AG04449 (cell line): ENCODE measurements at regions of chr19 and their contacts with region 1.

Region 1: GRCh38 chr19:40662921-40663694 is 27.3 kb downstream of the NUMBL start:
- DNase-seq: no peak
- H3K4me3 ChIP-seq: peak overlapping the region; percentile 68
- CTCF ChIP-seq: peak; percentile 94

Region 2: GRCh38 chr19:40640744-40641143 is 22.4 kb before region 1 on chr19:
- CTCF ChIA-PET with region 1: interaction called, 28 read pairs
- POLR2A ChIA-PET with region 1: interaction called, 3 read pairs
- DNase-seq: no peak
- H3K4me3 ChIP-seq: no peak overlapping the region
- CTCF ChIP-seq: no peak

Region 3: DNA sequence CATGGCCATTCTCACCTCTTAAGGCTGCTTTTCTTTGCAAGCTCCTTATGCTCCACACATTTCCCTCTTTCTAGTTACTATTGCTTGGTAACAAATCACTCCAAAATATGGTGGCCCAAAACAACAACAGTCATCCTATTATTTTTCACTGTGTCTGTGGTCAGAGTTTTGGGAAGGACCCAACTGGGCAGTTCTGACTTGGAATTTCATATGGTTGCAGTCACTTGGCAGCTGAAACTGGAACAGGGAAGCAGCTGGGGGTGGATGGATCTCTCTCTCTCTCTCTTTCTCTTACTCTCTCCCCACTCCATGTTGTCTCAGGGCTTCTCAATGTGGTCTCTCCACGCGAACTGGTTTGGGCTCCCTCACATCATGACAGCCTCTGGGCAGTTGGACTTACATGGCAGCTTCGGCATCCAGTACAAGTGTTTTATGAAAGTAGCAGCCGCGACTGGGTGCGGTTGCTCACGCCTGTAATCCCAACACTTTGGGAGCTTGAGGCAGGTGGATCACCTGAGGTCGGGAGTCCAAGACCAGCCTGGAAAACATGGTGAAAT is 12.3 kb before region 1 on chr19:
- CTCF ChIA-PET with region 1: interaction called, 42 read pairs
- POLR2A ChIA-PET with region 1: interaction called, 3 read pairs
- DNase-seq: no peak
- H3K4me3 ChIP-seq: no peak overlapping the region
- CTCF ChIP-seq: no peak

Region 4: GRCh38 chr19:40674291-40674690 is 11.2 kb after region 1 on chr19:
- CTCF ChIA-PET with region 1: interaction called, 16 read pairs
- POLR2A ChIA-PET with region 1: interaction called, 3 read pairs
- DNase-seq: no peak
- H3K4me3 ChIP-seq: no peak overlapping the region
- CTCF ChIP-seq: no peak

Region 5: GRCh38 chr19:40806488-40807468 is 143.7 kb after region 1 on chr19:
- CTCF ChIA-PET with region 1: interaction called, 58 read pairs
- POLR2A ChIA-PET with region 1: interaction called, 4 read pairs
- DNase-seq: peak; percentile 63
- H3K4me3 ChIP-seq: peak overlapping the region; percentile 20
- CTCF ChIP-seq: peak; percentile 98

Region 6: DNA sequence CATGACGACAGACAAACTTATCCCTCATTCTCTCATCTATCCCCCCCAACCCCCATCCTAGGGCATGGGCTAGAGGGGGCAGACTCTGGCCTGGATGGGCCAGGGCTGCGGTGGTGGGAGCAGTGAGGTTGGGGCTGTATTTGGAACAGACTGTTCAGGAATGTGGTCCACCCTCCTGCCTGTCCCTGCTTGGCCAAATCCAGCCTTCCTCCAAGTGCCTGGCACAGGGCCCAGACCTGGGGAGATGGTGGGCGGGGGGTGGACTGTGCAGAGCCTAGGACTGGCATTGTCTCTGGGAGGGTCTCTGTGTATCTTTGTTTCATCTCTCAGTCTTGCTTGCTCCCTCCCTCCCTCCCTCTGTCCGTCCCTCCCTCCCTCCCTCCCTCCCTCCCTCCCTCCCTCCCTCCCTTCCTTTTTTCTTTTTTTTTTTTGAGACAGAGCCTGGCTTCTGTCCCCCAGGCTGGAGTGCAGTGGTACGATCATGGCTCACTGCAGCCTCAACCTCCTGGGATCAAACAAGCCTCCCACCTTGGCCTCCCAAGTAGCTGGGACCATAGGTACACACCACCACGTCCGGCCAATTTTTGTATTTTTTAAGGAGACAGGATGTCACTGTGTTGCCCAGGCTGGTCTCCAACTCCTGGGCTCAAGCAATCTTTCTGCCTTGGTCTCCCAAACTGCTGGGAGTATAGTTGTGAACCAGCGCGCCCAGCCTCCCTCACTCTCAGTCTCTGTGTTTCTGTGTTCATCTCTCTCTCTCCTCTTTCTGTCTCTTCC is 150.3 kb after region 1 on chr19:
- CTCF ChIA-PET with region 1: interaction called, 58 read pairs
- POLR2A ChIA-PET with region 1: interaction called, 4 read pairs
- DNase-seq: no peak
- H3K4me3 ChIP-seq: no peak overlapping the region
- CTCF ChIP-seq: no peak

Region 7: DNA sequence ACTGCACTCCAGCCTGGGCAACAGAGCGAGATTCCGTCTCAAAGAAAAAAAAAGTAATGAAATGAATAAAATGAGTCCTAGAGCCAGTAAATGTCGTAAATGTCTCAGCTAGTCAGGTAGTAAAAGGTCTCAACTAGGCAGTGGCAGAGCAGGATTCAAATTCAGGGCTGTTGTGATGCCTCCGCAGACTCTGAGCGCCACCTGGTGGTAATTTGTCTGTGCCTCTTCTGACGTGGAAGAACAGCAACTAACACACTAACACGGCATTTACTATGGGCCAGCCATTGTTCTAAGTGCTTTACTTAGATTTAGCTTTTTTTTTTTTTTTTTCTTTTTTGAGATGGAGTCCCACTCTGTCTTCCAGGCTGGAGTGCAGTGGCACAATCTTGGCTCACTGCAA is 481.3 kb after region 1 on chr19:
- CTCF ChIA-PET with region 1: interaction called, 17 read pairs
- POLR2A ChIA-PET with region 1: no interaction called
- DNase-seq: peak; percentile 19
- H3K4me3 ChIP-seq: no peak overlapping the region
- CTCF ChIP-seq: peak; percentile 80